ENCODE measurements at regions of chr10 and their contacts with region 1.

Region 1: GRCh38 chr10:111076191-111076681 is 593 bp upstream of the ADRA2A start:
- DNase-seq: peak; percentile 23
- H3K4me3 Mint-ChIP-seq: peak overlapping the region; percentile 49
- H3K27ac Mint-ChIP-seq: no peak overlapping the region
- H3K4me1 Mint-ChIP-seq: peaks cover 8% of the 10 kb centered on the region
- H3K27me3 Mint-ChIP-seq: peaks cover 72% of the 10 kb centered on the region

Region 2: GRCh38 chr10:110643653-110644597 is 432.3 kb before region 1 on chr10 and contains the start of gene RBM20:
- intact Hi-C with region 1: loop called (anchors 5 kb)
- DNase-seq: no peak
- H3K4me3 Mint-ChIP-seq: peak within 1 kb of the TSS; percentile 75
- H3K27ac Mint-ChIP-seq: no peak within 1 kb of the TSS
- H3K4me1 Mint-ChIP-seq: peaks cover 23% of the 10 kb centered on the region
- H3K27me3 Mint-ChIP-seq: peaks cover 67% of the 10 kb centered on the region
- total RNA-seq, gene RBM20: 0.02 TPM in 1 of 2 replicates, not detected in the other

Region 3: DNA sequence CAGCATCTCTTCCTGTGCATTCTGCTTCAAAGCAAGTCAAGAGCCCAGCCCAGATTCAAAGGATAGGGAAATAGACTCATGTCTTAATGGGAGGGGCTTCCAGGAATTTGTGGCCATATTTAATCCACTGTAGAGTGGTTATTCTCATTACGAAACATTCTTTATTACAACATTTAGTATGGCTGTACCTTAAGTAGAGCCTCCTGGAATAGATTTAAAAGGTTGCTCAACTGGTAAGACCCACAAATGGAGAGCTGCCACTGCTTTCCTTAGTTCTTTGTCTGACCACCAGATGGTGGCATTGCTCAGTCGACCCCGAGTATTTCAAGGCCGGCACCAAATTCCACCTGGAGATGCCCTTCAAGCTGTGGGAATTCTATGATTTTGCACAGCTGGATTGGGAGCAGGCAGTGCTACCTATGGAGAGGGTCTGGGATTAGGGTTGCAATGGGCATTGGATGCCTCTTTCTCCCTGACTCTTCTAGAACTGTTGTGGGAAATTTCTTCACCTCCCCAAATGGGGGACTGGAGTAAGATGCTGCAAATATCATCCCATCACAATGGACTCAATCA is 329.9 kb before region 1 on chr10:
- intact Hi-C with region 1: loop called (anchors 10 kb)
- DNase-seq: peak; percentile 27
- H3K4me3 Mint-ChIP-seq: no peak overlapping the region
- H3K27ac Mint-ChIP-seq: no peak overlapping the region
- H3K4me1 Mint-ChIP-seq: peaks cover 43% of the 10 kb centered on the region
- H3K27me3 Mint-ChIP-seq: no peaks in the 10 kb centered on the region

Region 4: GRCh38 chr10:110918643-110919363 is 157.4 kb before region 1 on chr10 and contains the start of gene BBIP1:
- intact Hi-C with region 1: loop called (anchors 5 kb)
- DNase-seq: no peak
- H3K4me3 Mint-ChIP-seq: peak within 1 kb of the TSS; percentile 94
- H3K27ac Mint-ChIP-seq: peak within 1 kb of the TSS; percentile 93
- H3K4me1 Mint-ChIP-seq: peaks cover 39% of the 10 kb centered on the region
- H3K27me3 Mint-ChIP-seq: no peaks in the 10 kb centered on the region
- total RNA-seq, gene BBIP1: 31.5 and 32.7 TPM in 2 replicates

Region 5: DNA sequence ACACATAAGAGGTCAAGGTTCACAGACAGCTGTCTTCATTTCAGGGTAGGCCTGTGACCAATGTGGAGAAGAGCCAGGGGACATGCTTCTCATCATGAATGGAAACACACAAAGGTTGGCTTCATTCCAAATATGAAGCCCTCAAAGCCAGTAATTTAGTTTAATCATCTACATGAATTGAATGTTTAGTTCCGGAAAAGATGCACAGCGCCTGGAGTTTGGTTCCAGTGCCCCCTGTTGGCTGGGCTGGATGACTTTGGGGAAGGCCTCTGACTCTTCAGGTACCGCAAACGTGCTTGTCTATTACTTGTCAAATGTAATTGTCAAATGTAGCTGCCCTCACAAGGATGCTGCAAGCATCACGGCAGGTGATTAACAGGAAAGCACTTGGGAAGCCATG is 131.3 kb after region 1 on chr10:
- intact Hi-C with region 1: loop called (anchors 5 kb)
- DNase-seq: no peak
- H3K4me3 Mint-ChIP-seq: no peak overlapping the region
- H3K27ac Mint-ChIP-seq: no peak overlapping the region
- H3K4me1 Mint-ChIP-seq: no peaks in the 10 kb centered on the region
- H3K27me3 Mint-ChIP-seq: peaks cover 2% of the 10 kb centered on the region

Region 6: GRCh38 chr10:111598436-111599059 is 522.3 kb after region 1 on chr10:
- intact Hi-C with region 1: loop called (anchors 5 kb)
- DNase-seq: peak; percentile 14
- H3K4me3 Mint-ChIP-seq: no peak overlapping the region
- H3K27ac Mint-ChIP-seq: no peak overlapping the region
- H3K4me1 Mint-ChIP-seq: no peaks in the 10 kb centered on the region
- H3K27me3 Mint-ChIP-seq: no peaks in the 10 kb centered on the region

Measured in activated T-helper 2 cell treated with anti-CD3 and anti-CD28 coated beads, Interferon-gamma antibody, Interleukin-2, Interleukin-4, amounts not matched to agents 10 μg/mL and 5 μg/mL and 100 μg/mL, durations not matched to agents 14 hours and 24 hours and 36 hours (primary cell).